ENCODE measurements at regions of chr1 and their contacts with region 1.

Region 1: GRCh38 chr1:206912445-206913095 is 9.2 kb downstream of the FCMR start:
- DNase-seq: peak; percentile 63
- H3K4me3 ChIP-seq: no peak overlapping the region
- CTCF ChIP-seq: peak; percentile 75

Region 2: GRCh38 chr1:206634365-206635079 is 278.0 kb before region 1 on chr1:
- in situ Hi-C with region 1: loop called (anchors 5 kb)
- DNase-seq: peak; percentile 75
- H3K4me3 ChIP-seq: peak overlapping the region; percentile 85
- CTCF ChIP-seq: peak; percentile 81

Region 3: DNA sequence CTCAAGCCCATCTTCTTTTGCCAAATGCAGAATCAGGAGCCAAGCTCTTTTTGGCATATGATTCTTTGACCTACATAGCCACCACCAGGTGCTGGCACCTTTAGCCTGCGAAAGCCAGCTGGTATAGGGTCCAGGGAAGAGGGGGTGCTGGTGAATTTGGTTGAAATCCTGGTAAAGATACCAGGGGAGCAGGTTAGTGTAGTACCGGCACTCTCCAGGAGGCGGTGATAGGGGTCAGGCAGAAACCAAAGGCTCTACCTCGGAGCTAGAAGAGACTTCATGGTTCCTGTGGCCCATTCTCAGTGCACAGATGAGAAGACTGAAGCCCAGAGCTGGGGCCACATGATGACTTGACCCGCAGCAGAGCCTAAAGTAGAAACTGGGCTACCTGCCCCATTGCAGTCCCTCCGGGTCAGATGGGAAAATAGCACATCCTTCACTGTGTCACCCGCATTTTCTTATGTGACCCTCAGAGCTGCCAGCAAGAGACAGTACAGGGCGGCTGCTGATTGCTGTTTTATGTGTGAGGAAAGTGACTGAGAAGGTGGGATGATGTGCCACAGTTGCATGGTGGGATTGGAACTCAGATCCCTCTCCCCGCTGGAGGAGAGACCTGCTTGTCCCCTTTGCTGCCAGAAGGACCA is 177.9 kb before region 1 on chr1:
- in situ Hi-C with region 1: loop called (anchors 25 kb)
- DNase-seq: no peak
- H3K4me3 ChIP-seq: no peak overlapping the region
- CTCF ChIP-seq: peak; percentile 89

Region 4: GRCh38 chr1:206985162-206985749 is 72.7 kb after region 1 on chr1:
- in situ Hi-C with region 1: loop called (anchors 5 kb)
- DNase-seq: no peak
- H3K4me3 ChIP-seq: no peak overlapping the region
- CTCF ChIP-seq: no peak